CD8-positive, alpha-beta memory T cell (primary cell): ENCODE measurements at regions of chr11 and their contacts with region 1.

Region 1: DNA sequence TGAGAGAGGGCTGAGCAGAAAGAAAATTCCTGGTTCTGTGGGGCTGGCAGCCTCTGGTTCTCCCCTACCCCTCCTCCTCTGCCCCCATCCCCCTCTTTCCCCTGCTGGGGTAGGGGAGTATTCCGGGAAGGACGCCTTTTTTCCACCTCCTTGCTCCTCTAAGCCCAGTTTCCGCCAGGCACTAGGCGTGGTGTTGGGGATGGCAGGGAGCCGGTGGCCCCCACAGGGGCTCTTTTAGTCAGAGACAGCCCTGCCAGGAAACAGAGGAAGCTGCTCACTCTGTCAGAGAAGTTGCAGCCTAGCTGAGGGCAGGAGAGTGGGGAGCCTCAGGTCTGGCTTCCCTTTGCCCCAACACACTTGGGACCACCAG is 15.6 kb upstream of the ARHGEF17 start:
- DNase-seq: no peak
- H3K4me3 ChIP-seq: no peak overlapping the region
- H3K4me3 Mint-ChIP-seq: no peak overlapping the region
- H3K27ac ChIP-seq: no peak overlapping the region
- H3K27ac Mint-ChIP-seq: peak overlapping the region in 1 of 8 donors; percentile 21
- H3K4me1 ChIP-seq: no peaks in the 10 kb centered on the region
- H3K4me1 Mint-ChIP-seq: peaks cover 0 to 11% (median 6%) of the 10 kb centered on the region in 3 donors
- H3K27me3 ChIP-seq: no peaks in the 10 kb centered on the region
- H3K27me3 Mint-ChIP-seq: peaks cover 2 to 3% of the 10 kb centered on the region in 2 donors

Region 2: DNA sequence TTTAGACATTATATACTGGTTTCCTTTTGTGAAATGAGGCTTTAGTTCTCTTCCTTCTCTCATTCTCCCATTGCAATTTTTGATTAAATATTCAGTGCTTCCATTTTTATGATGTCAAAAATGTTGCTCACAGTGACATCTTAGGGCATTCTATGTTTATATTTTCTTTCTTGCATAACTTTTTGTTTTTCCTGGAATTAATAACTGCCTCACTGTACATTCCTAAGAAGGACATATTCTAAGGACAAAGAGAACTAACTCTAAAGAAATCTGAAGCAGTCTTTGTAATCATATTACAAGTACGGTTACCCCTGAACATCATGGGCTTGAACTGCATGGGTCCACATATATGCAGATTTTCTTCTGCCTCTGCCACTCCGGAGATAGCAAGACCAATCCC is 46.2 kb before region 1 on chr11:
- CTCF ChIA-PET with region 1: no interaction called
- POLR2A ChIA-PET with region 1: no interaction called
- DNase-seq: no peak
- H3K4me3 ChIP-seq: no peak overlapping the region
- H3K4me3 Mint-ChIP-seq: no peak overlapping the region
- H3K27ac ChIP-seq: no peak overlapping the region
- H3K27ac Mint-ChIP-seq: no peak overlapping the region
- H3K4me1 ChIP-seq: peaks cover 4% of the 10 kb centered on the region
- H3K4me1 Mint-ChIP-seq: peaks cover 0 to 7% (median 1%) of the 10 kb centered on the region in 3 donors
- H3K27me3 ChIP-seq: no peaks in the 10 kb centered on the region
- H3K27me3 Mint-ChIP-seq: peaks cover 0 to 9% of the 10 kb centered on the region in 2 donors

Region 3: DNA sequence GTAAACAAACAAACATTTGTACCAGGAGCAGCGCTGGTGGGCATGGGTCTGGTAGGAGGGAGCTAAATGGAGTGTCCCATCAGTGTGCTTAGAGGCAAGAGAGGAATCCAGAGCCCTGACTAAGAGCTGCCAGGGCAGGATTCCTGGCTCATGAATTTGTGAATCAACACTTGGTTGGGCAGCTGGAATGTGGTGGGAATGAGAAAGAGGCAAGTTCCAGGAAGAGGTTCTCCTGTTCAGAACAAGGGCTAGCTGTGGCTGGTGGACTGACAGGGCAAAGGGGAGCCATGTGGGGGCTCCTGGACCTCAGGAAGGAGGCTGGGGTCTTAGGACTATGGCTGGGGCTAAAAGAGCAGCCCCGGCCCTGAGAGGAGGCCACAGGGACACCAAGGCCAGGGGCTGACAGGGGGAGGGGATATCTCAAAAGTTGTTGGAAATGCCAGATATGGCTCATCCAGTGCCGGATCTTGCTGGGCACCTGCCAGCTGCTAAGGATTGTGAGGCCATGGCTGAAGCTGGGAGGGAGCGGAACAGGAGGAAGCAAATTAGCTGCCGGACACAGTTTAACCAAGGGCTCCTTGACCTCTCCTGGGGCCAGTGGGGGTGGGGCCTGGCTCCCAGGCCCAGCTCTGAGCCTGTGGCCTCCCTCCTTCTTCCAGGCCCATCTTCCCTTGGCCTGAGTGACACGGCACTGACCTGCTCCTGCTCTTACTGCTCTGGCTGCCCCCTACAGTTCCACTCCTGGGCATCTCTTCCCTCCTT is 35.0 kb before region 1 on chr11:
- CTCF ChIA-PET with region 1: no interaction called
- POLR2A ChIA-PET with region 1: no interaction called
- DNase-seq: no peak
- H3K4me3 ChIP-seq: no peak overlapping the region
- H3K4me3 Mint-ChIP-seq: no peak overlapping the region
- H3K27ac ChIP-seq: no peak overlapping the region
- H3K27ac Mint-ChIP-seq: no peak overlapping the region
- H3K4me1 ChIP-seq: no peaks in the 10 kb centered on the region
- H3K4me1 Mint-ChIP-seq: no peaks in the 10 kb centered on the region
- H3K27me3 ChIP-seq: no peaks in the 10 kb centered on the region
- H3K27me3 Mint-ChIP-seq: peaks cover 4 to 15% of the 10 kb centered on the region in 2 donors

Region 4: GRCh38 chr11:73274752-73275743 is 17.5 kb before region 1 on chr11:
- CTCF ChIA-PET with region 1: no interaction called
- POLR2A ChIA-PET with region 1: no interaction called
- DNase-seq: no peak
- H3K4me3 ChIP-seq: no peak overlapping the region
- H3K4me3 Mint-ChIP-seq: no peak overlapping the region
- H3K27ac ChIP-seq: no peak overlapping the region
- H3K27ac Mint-ChIP-seq: no peak overlapping the region
- H3K4me1 ChIP-seq: no peaks in the 10 kb centered on the region
- H3K4me1 Mint-ChIP-seq: no peaks in the 10 kb centered on the region
- H3K27me3 ChIP-seq: peaks cover 4% of the 10 kb centered on the region
- H3K27me3 Mint-ChIP-seq: peaks cover 0 to 6% of the 10 kb centered on the region in 2 donors

Region 5: GRCh38 chr11:73307323-73308002 is 15.0 kb after region 1 on chr11:
- CTCF ChIA-PET with region 1: interaction called, 15 read pairs
- POLR2A ChIA-PET with region 1: no interaction called
- DNase-seq: peak; percentile 79 to 91 (median 82)
- H3K4me3 ChIP-seq: peak overlapping the region; percentile 67
- H3K4me3 Mint-ChIP-seq: peak overlapping the region; percentile 86 to 96 (median 89)
- H3K27ac ChIP-seq: peak overlapping the region; percentile 25
- H3K27ac Mint-ChIP-seq: peak overlapping the region in 6 of 8 donors; percentile 4 to 95 (median 30)
- H3K4me1 ChIP-seq: peaks cover 7% of the 10 kb centered on the region
- H3K4me1 Mint-ChIP-seq: peaks cover 9 to 10% (median 10%) of the 10 kb centered on the region in 3 donors
- H3K27me3 ChIP-seq: peaks cover 5% of the 10 kb centered on the region
- H3K27me3 Mint-ChIP-seq: peaks cover 16 to 33% of the 10 kb centered on the region in 2 donors

Region 6: GRCh38 chr11:73321604-73322381 is 29.3 kb after region 1 on chr11:
- CTCF ChIA-PET with region 1: no interaction called
- POLR2A ChIA-PET with region 1: no interaction called
- DNase-seq: no peak
- H3K4me3 ChIP-seq: no peak overlapping the region
- H3K4me3 Mint-ChIP-seq: no peak overlapping the region
- H3K27ac ChIP-seq: no peak overlapping the region
- H3K27ac Mint-ChIP-seq: peak overlapping the region in 1 of 8 donors; percentile 33
- H3K4me1 ChIP-seq: no peaks in the 10 kb centered on the region
- H3K4me1 Mint-ChIP-seq: peaks cover 0 to 9% (median 0%) of the 10 kb centered on the region in 3 donors
- H3K27me3 ChIP-seq: no peaks in the 10 kb centered on the region
- H3K27me3 Mint-ChIP-seq: peaks cover 3% of the 10 kb centered on the region in 2 donors

Region 7: GRCh38 chr11:74592441-74593362 is 1300.2 kb after region 1 on chr11 and contains the start of gene POLD3:
- CTCF ChIA-PET with region 1: no interaction called
- POLR2A ChIA-PET with region 1: interaction called, 10 read pairs
- DNase-seq: peak; percentile 85 to 95 (median 88)
- H3K4me3 ChIP-seq: peak within 1 kb of the TSS; percentile 80
- H3K4me3 Mint-ChIP-seq: peak within 1 kb of the TSS; percentile 91 to 100 (median 95)
- H3K27ac ChIP-seq: peak within 1 kb of the TSS; percentile 84
- H3K27ac Mint-ChIP-seq: peak within 1 kb of the TSS; percentile 88 to 99 (median 95)
- H3K4me1 ChIP-seq: peaks cover 14% of the 10 kb centered on the region
- H3K4me1 Mint-ChIP-seq: peaks cover 22 to 37% (median 30%) of the 10 kb centered on the region in 3 donors
- H3K27me3 ChIP-seq: no peaks in the 10 kb centered on the region
- H3K27me3 Mint-ChIP-seq: peaks cover 2 to 6% of the 10 kb centered on the region in 2 donors
- total RNA-seq, gene POLD3: 53.8 to 57.5 TPM